ENCODE measurements at regions of chr12 and their contacts with region 1.

Region 1: GRCh38 chr12:25386831-25387731 is 136.4 kb upstream of the KRAS start:
- DNase-seq: peak; percentile 60 to 91 (median 77)
- ATAC-seq: no peak
- H3K4me3 ChIP-seq: peak overlapping the region; percentile 93
- H3K4me3 Mint-ChIP-seq: peak overlapping the region; percentile 96
- H3K27ac ChIP-seq: peak overlapping the region; percentile 100
- H3K27ac Mint-ChIP-seq: peak overlapping the region; percentile 100
- H3K4me1 ChIP-seq: peaks cover 26% of the 10 kb centered on the region
- H3K4me1 Mint-ChIP-seq: peaks cover 43% of the 10 kb centered on the region
- H3K27me3 ChIP-seq: no peaks in the 10 kb centered on the region
- H3K27me3 Mint-ChIP-seq: no peaks in the 10 kb centered on the region
- CTCF ChIP-seq: peak; percentile 84

Region 2: GRCh38 chr12:25151476-25151875 is 235.6 kb before region 1 on chr12:
- CTCF ChIA-PET with region 1: no interaction called
- POLR2A ChIA-PET with region 1: interaction called, 3 read pairs
- intact Hi-C with region 1: loop called in 1 of 2 experiments (anchors 1 kb)
- DNase-seq: no peak
- ATAC-seq: no peak
- H3K4me3 ChIP-seq: no peak overlapping the region
- H3K4me3 Mint-ChIP-seq: no peak overlapping the region
- H3K27ac ChIP-seq: no peak overlapping the region
- H3K27ac Mint-ChIP-seq: no peak overlapping the region
- H3K4me1 ChIP-seq: peaks cover 4% of the 10 kb centered on the region
- H3K4me1 Mint-ChIP-seq: peaks cover 5% of the 10 kb centered on the region
- H3K27me3 ChIP-seq: no peaks in the 10 kb centered on the region
- H3K27me3 Mint-ChIP-seq: no peaks in the 10 kb centered on the region
- CTCF ChIP-seq: no peak

Region 3: DNA sequence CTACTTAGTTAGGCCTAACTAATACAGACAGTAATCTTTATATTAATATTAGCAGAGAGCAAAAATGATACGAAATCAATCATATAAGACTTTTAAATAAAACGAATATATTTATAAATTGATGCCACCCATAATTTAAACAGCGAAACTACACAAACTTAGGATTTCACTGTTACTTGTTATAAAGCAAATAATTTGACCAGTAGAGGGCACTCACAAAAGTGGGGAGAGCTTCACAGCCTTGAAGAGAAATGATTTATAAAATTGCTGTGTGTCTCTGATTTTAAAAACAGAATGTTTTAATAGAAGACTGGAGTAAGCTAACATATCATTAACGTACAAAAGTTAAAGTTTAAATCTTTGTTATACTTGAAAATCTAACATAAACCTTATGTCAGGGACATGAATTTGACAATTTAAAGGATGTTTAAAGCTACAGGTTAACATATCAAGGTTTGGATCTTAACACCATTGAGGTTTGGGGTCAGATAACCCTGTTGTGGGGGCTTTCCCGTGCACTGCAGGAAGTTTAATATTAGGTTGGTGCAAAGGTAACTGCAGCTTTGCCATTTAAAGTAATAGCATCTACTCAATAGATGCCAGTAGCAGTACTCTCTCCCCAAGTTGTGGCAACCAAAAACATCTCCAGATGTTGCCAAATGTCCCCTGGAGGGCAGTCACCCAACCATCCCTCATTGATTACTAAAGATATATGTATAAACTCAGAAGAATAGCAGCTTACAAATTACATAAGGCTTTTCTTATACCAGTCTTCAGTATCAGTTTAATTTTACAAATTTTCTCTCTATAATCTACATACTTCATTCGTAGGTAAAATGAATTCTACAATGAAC is 145.7 kb before region 1 on chr12:
- CTCF ChIA-PET with region 1: no interaction called
- POLR2A ChIA-PET with region 1: interaction called, 8 read pairs
- intact Hi-C with region 1: loop called (anchors 1 kb)
- DNase-seq: peak in 7 of 9 experiments; percentile 6 to 87 (median 37)
- ATAC-seq: peak; percentile 94
- H3K4me3 ChIP-seq: no peak overlapping the region
- H3K4me3 Mint-ChIP-seq: no peak overlapping the region
- H3K27ac ChIP-seq: peak overlapping the region; percentile 9 to 70
- H3K27ac Mint-ChIP-seq: peak overlapping the region; percentile 81
- H3K4me1 ChIP-seq: peaks cover 9% of the 10 kb centered on the region
- H3K4me1 Mint-ChIP-seq: peaks cover 65% of the 10 kb centered on the region
- H3K27me3 ChIP-seq: no peaks in the 10 kb centered on the region
- H3K27me3 Mint-ChIP-seq: no peaks in the 10 kb centered on the region
- CTCF ChIP-seq: peak; percentile 96

Region 4: DNA sequence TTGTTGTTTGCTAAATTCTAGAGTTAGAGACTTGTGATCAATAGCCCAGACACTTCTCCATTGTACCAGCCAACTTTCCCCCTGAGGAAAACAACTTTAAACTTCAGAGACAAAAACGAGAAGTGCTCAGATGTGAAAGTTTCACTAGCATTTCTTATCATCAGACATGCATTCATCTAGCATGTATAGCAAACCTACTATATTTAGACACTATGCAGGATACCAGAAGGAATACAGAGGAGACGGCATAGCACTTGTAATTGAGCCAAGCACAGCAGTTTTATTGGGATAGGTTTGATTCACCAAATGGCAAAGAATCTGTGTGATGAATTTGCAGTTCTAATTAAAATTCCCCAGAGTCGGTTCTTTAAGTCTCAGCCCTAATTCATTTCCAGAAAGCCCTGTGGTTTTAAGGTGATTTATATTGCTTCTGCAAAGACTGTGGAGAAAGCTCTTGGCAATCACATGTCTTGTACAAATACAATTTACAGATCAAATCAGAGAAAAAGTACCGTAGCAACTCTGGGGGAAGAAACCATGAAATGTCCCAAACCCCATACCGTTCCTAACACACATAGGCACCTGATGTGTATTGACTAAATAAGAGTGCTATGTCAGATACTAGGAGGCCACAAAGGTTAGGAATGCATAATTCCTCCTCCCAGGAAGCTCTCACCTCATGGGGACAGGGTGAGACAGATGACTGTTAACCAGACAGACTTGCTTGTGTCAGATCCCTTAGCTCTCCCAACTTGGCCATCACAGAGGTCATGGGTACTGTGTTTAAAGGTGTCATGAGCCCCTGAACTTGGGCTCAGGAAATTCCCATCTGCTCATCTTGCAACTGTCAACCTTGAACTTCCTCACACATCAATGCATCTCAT is 66.7 kb before region 1 on chr12:
- CTCF ChIA-PET with region 1: interaction called, 10 read pairs
- POLR2A ChIA-PET with region 1: interaction called, 6 read pairs
- intact Hi-C with region 1: no loop called
- DNase-seq: peak in 2 of 9 experiments; percentile 5 to 13
- ATAC-seq: no peak
- H3K4me3 ChIP-seq: no peak overlapping the region
- H3K4me3 Mint-ChIP-seq: no peak overlapping the region
- H3K27ac ChIP-seq: no peak overlapping the region
- H3K27ac Mint-ChIP-seq: no peak overlapping the region
- H3K4me1 ChIP-seq: peaks cover 37% of the 10 kb centered on the region
- H3K4me1 Mint-ChIP-seq: peaks cover 46% of the 10 kb centered on the region
- H3K27me3 ChIP-seq: no peaks in the 10 kb centered on the region
- H3K27me3 Mint-ChIP-seq: no peaks in the 10 kb centered on the region
- CTCF ChIP-seq: no peak

Region 5: GRCh38 chr12:25347716-25348271 is 39.3 kb before region 1 on chr12:
- CTCF ChIA-PET with region 1: interaction called, 3 read pairs
- POLR2A ChIA-PET with region 1: interaction called, 6 read pairs
- intact Hi-C with region 1: loop called in 1 of 2 experiments (anchors 5 kb)
- DNase-seq: no peak
- ATAC-seq: no peak
- H3K4me3 ChIP-seq: no peak overlapping the region
- H3K4me3 Mint-ChIP-seq: no peak overlapping the region
- H3K27ac ChIP-seq: no peak overlapping the region
- H3K27ac Mint-ChIP-seq: no peak overlapping the region
- H3K4me1 ChIP-seq: no peaks in the 10 kb centered on the region
- H3K4me1 Mint-ChIP-seq: peaks cover 6% of the 10 kb centered on the region
- H3K27me3 ChIP-seq: no peaks in the 10 kb centered on the region
- H3K27me3 Mint-ChIP-seq: no peaks in the 10 kb centered on the region
- CTCF ChIP-seq: no peak

Measured in CD8-positive, alpha-beta T cell (primary cell).